SK-N-SH (cell line): ENCODE measurements at regions of chr7 and their contacts with region 1.

Region 1: DNA sequence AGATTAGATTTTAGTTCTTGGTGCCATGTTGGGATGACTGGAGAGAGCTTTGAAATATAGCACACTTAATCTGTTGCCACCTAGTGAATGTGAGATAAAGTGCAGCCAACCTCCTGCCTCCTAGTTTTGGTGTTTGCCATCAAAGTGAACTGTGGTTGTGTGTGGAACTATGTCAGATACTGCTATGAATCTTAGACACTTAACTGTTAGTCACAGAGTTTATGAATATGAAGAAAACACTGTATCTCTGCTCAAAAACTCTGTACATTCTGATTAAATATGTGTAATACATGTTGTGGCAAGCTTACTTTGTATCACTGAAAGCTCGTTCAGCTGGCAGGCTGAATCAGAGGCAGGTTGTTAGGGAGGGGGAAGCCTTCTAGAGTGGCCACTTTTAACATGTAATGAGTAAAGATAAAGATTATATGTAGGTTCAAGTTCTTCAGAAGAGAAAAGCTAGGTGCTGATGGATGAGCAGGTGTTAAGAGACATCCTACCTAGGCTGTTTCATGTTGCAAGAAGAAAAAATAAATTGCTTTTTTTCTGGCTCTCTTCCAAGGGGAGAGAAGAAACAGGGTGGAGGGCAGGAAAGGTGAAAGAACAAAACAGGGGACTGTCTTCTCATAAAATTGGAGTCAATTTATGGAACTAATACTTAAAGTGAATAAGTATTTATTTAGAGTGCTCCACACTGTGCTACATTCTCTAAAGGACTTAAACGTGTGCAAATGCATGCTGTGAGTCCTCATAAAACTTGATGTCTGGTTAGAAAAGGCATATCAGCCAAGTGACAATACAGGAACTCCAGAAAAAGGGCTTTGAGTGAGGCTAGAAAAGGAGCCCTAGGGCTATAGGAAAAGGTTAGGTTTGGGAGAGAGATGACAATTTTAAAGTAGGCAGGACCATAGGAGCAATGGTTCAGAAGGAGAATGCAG is 14.1 kb upstream of the LAMB1 start:
- DNase-seq: peak; percentile 36
- H3K4me3 ChIP-seq: no peak overlapping the region
- H3K27ac ChIP-seq: peak overlapping the region in 1 of 2 experiments; percentile 95; a peak in 2 of 4 replicates
- H3K4me1 ChIP-seq: peaks cover 4 to 43% of the 10 kb centered on the region in 2 experiments
- H3K27me3 ChIP-seq: no peaks in the 10 kb centered on the region
- CTCF ChIP-seq: peak; percentile 73
- EP300 ChIP-seq: peak in 1 of 2 experiments; percentile 24; a peak in 1 of 4 replicates
- RAD21 ChIP-seq: peak; percentile 75

Region 2: GRCh38 chr7:108002726-108003598 is 14.1 kb before region 1 on chr7 and contains the start of gene LAMB1:
- CTCF ChIA-PET with region 1: interaction called, 31 read pairs
- POLR2A ChIA-PET with region 1: interaction called, 5 read pairs
- DNase-seq: peak; percentile 98
- H3K4me3 ChIP-seq: peak within 1 kb of the TSS; percentile 92 to 95
- H3K27ac ChIP-seq: peak within 1 kb of the TSS; percentile 93 to 100
- H3K4me1 ChIP-seq: peaks cover 43 to 56% of the 10 kb centered on the region in 2 experiments
- H3K27me3 ChIP-seq: no peaks in the 10 kb centered on the region
- CTCF ChIP-seq: no peak
- EP300 ChIP-seq: peak; percentile 27 to 35; a peak in 1 of 4 replicates
- RAD21 ChIP-seq: 0 out of 2 replicates have a peak, but pooled peaks have one; percentile 31
- polyA plus RNA-seq, gene LAMB1: 435 and 471 TPM in 2 replicates

Region 3: DNA sequence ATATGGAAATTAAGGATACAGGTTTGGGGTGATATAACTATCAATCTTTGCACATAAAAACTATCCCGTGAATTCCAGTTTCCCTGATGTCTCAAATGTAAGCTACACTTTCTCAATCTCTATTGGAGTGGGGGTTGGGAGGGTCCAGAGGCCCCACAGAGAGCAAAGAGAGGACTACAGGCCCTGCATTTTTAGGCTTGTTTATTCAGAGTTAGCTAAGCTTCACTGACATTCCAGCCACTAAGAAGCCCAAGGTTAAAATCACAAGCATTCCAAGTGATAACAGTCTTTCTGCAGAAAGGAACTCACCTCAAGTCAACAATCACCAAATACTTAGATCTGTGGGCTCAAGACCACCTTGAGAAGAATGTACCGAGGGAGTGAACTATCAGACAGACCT is 17.5 kb after region 1 on chr7:
- CTCF ChIA-PET with region 1: interaction called, 32 read pairs
- POLR2A ChIA-PET with region 1: no interaction called
- DNase-seq: no peak
- H3K4me3 ChIP-seq: no peak overlapping the region
- H3K27ac ChIP-seq: no peak overlapping the region
- H3K4me1 ChIP-seq: peaks cover 2 to 14% of the 10 kb centered on the region in 2 experiments; a peak in 2 of 4 replicates
- H3K27me3 ChIP-seq: no peaks in the 10 kb centered on the region
- CTCF ChIP-seq: no peak
- EP300 ChIP-seq: no peak
- RAD21 ChIP-seq: no peak